Caco-2 (cell line): ENCODE measurements at regions of chr12 and their contacts with region 1.

Region 1: GRCh38 chr12:13211859-13212664 is 15.5 kb downstream of the EMP1 start:
- DNase-seq: peak; percentile 83 to 87
- H3K4me3 ChIP-seq: no peak overlapping the region
- H3K4me3 Mint-ChIP-seq: peak overlapping the region; percentile 17
- H3K27ac Mint-ChIP-seq: peak overlapping the region; percentile 59
- H3K4me1 ChIP-seq: peaks cover 21% of the 10 kb centered on the region
- H3K4me1 Mint-ChIP-seq: peaks cover 17% of the 10 kb centered on the region
- H3K27me3 ChIP-seq: no peaks in the 10 kb centered on the region
- H3K27me3 Mint-ChIP-seq: no peaks in the 10 kb centered on the region
- CTCF ChIP-seq: peak; percentile 91 to 97

Region 2: DNA sequence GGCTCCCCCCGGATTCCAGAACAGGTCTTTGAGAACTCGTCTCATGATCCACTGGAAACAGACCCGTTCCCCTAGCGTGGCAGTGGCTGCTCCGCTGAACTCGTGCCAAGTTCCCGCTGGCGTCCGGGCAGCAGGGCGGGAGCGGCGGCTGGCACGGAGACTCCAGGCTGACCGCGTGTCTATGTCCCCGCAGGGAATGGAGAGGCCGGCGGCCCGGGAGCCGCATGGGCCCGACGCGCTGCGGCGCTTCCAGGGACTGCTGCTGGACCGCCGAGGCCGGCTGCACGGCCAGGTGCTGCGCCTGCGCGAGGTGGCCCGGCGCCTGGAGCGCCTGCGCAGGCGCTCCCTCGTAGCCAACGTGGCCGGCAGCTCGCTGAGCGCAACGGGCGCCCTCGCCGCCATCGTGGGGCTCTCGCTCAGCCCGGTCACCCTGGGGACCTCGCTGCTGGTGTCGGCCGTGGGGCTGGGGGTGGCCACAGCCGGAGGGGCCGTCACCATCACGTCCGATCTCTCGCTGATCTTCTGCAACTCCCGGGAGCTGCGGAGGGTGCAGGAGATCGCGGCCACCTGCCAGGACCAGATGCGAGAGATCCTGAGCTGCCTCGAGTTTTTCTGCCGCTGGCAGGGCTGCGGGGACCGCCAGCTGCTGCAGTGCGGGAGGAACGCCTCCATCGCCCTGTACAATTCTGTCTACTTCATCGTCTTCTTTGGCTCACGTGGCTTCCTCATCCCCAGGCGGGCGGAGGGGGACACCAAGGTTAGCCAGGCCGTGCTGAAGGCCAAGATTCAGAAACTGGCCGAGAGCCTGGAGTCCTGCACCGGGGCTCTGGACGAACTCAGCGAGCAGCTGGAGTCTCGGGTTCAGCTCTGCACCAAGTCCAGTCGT is 425.1 kb before region 1 on chr12:
- CTCF ChIA-PET with region 1: no interaction called
- POLR2A ChIA-PET with region 1: no interaction called
- intact Hi-C with region 1: loop called (anchors 5 kb)
- DNase-seq: peak; percentile 89 to 94
- H3K4me3 ChIP-seq: peak overlapping the region; percentile 65
- H3K4me3 Mint-ChIP-seq: peak overlapping the region; percentile 88
- H3K27ac Mint-ChIP-seq: peak overlapping the region; percentile 95
- H3K4me1 ChIP-seq: peaks cover 48% of the 10 kb centered on the region
- H3K4me1 Mint-ChIP-seq: peaks cover 23% of the 10 kb centered on the region
- H3K27me3 ChIP-seq: no peaks in the 10 kb centered on the region
- H3K27me3 Mint-ChIP-seq: no peaks in the 10 kb centered on the region
- CTCF ChIP-seq: peak in 1 of 2 experiments; percentile 26

Region 3: GRCh38 chr12:12983420-12984035 is 228.5 kb before region 1 on chr12:
- CTCF ChIA-PET with region 1: interaction called, 10 read pairs
- POLR2A ChIA-PET with region 1: no interaction called
- intact Hi-C with region 1: loop called (anchors 1 kb)
- DNase-seq: peak in 1 of 2 experiments; percentile 70
- H3K4me3 ChIP-seq: no peak overlapping the region
- H3K4me3 Mint-ChIP-seq: no peak overlapping the region
- H3K27ac Mint-ChIP-seq: no peak overlapping the region
- H3K4me1 ChIP-seq: peaks cover 23% of the 10 kb centered on the region
- H3K4me1 Mint-ChIP-seq: no peaks in the 10 kb centered on the region
- H3K27me3 ChIP-seq: no peaks in the 10 kb centered on the region
- H3K27me3 Mint-ChIP-seq: no peaks in the 10 kb centered on the region
- CTCF ChIP-seq: peak; percentile 75 to 78

Region 4: GRCh38 chr12:13023811-13024530 is 188.1 kb before region 1 on chr12:
- CTCF ChIA-PET with region 1: interaction called, 23 read pairs
- POLR2A ChIA-PET with region 1: no interaction called
- intact Hi-C with region 1: loop called (anchors 1 kb)
- DNase-seq: no peak
- H3K4me3 ChIP-seq: no peak overlapping the region
- H3K4me3 Mint-ChIP-seq: no peak overlapping the region
- H3K27ac Mint-ChIP-seq: no peak overlapping the region
- H3K4me1 ChIP-seq: no peaks in the 10 kb centered on the region
- H3K4me1 Mint-ChIP-seq: no peaks in the 10 kb centered on the region
- H3K27me3 ChIP-seq: no peaks in the 10 kb centered on the region
- H3K27me3 Mint-ChIP-seq: peaks cover 8% of the 10 kb centered on the region
- CTCF ChIP-seq: peak in 1 of 2 experiments; percentile 53

Region 5: GRCh38 chr12:13148064-13148847 is 63.8 kb before region 1 on chr12:
- CTCF ChIA-PET with region 1: no interaction called
- POLR2A ChIA-PET with region 1: no interaction called
- intact Hi-C with region 1: loop called (anchors 1 kb)
- DNase-seq: peak; percentile 78 to 79
- H3K4me3 ChIP-seq: no peak overlapping the region
- H3K4me3 Mint-ChIP-seq: peak overlapping the region; percentile 37
- H3K27ac Mint-ChIP-seq: peak overlapping the region; percentile 29
- H3K4me1 ChIP-seq: peaks cover 50% of the 10 kb centered on the region
- H3K4me1 Mint-ChIP-seq: peaks cover 45% of the 10 kb centered on the region
- H3K27me3 ChIP-seq: no peaks in the 10 kb centered on the region
- H3K27me3 Mint-ChIP-seq: no peaks in the 10 kb centered on the region
- CTCF ChIP-seq: no peak

Region 6: GRCh38 chr12:13223179-13223859 is 11.3 kb after region 1 on chr12:
- CTCF ChIA-PET with region 1: interaction called, 11 read pairs
- POLR2A ChIA-PET with region 1: no interaction called
- intact Hi-C with region 1: no loop called
- DNase-seq: peak in 1 of 2 experiments; percentile 64
- H3K4me3 ChIP-seq: no peak overlapping the region
- H3K4me3 Mint-ChIP-seq: no peak overlapping the region
- H3K27ac Mint-ChIP-seq: peak overlapping the region; percentile 3
- H3K4me1 ChIP-seq: peaks cover 16% of the 10 kb centered on the region
- H3K4me1 Mint-ChIP-seq: peaks cover 21% of the 10 kb centered on the region
- H3K27me3 ChIP-seq: no peaks in the 10 kb centered on the region
- H3K27me3 Mint-ChIP-seq: peaks cover 3% of the 10 kb centered on the region
- CTCF ChIP-seq: no peak